PC-3 (cell line): ENCODE measurements at regions of chr2 and their contacts with region 1.

Region 1: GRCh38 chr2:8872821-8873432 is 35.5 kb upstream of the KIDINS220 start:
- DNase-seq: peak; percentile 70
- ATAC-seq: 0 out of 2 replicates have a peak, but pooled peaks have one; percentile 40
- H3K4me3 ChIP-seq: no peak overlapping the region
- H3K27ac ChIP-seq: no peak overlapping the region
- H3K4me1 ChIP-seq: 0 out of 2 replicates have a peak, but pooled peaks cover 4% of the 10 kb centered on the region
- H3K27me3 ChIP-seq: no peaks in the 10 kb centered on the region
- CTCF ChIP-seq: peak; percentile 77

Region 2: GRCh38 chr2:8841932-8842331 is 31.0 kb before region 1 on chr2:
- CTCF ChIA-PET with region 1: no interaction called
- POLR2A ChIA-PET with region 1: no interaction called
- intact Hi-C with region 1: no loop called
- DNase-seq: no peak
- ATAC-seq: no peak
- H3K4me3 ChIP-seq: no peak overlapping the region
- H3K27ac ChIP-seq: no peak overlapping the region
- H3K4me1 ChIP-seq: peaks cover 3% of the 10 kb centered on the region; the same call in 1 of the 2 replicates
- H3K27me3 ChIP-seq: no peaks in the 10 kb centered on the region
- CTCF ChIP-seq: no peak

Region 3: GRCh38 chr2:8907764-8908288 is 34.9 kb after region 1 on chr2:
- CTCF ChIA-PET with region 1: no interaction called
- POLR2A ChIA-PET with region 1: no interaction called
- intact Hi-C with region 1: no loop called
- DNase-seq: no peak
- ATAC-seq: no peak
- H3K4me3 ChIP-seq: no peak overlapping the region
- H3K27ac ChIP-seq: no peak overlapping the region
- H3K4me1 ChIP-seq: peaks cover 9% of the 10 kb centered on the region
- H3K27me3 ChIP-seq: no peaks in the 10 kb centered on the region
- CTCF ChIP-seq: no peak

Region 4: GRCh38 chr2:9071032-9071431 is 198.1 kb after region 1 on chr2:
- CTCF ChIA-PET with region 1: no interaction called
- POLR2A ChIA-PET with region 1: no interaction called
- intact Hi-C with region 1: loop called (anchors 5 kb)
- DNase-seq: peak; percentile 99
- ATAC-seq: peak; percentile 94
- H3K4me3 ChIP-seq: no peak overlapping the region
- H3K27ac ChIP-seq: peak overlapping the region; percentile 92
- H3K4me1 ChIP-seq: peaks cover 32% of the 10 kb centered on the region
- H3K27me3 ChIP-seq: no peaks in the 10 kb centered on the region
- CTCF ChIP-seq: no peak